Gastrocnemius medialis (tissue), 4 donors: ENCODE measurements at regions of chr5 and their contacts with region 1.

Region 1: GRCh38 chr5:65481635-65482295 is at the start of gene ADAMTS6:
- DNase-seq: peak; percentile 85 to 86
- ATAC-seq: peak; percentile 83 to 86
- H3K4me3 ChIP-seq: peak within 1 kb of the TSS; percentile 65 to 72 (median 68)
- H3K27ac ChIP-seq: peak within 1 kb of the TSS; percentile 84 to 89 (median 86)
- H3K4me1 ChIP-seq: peaks cover 8 to 10% of the 10 kb centered on the region in 2 donors
- H3K27me3 ChIP-seq: no peaks in the 10 kb centered on the region
- CTCF ChIP-seq: no peak
- POLR2A ChIP-seq: peak; percentile 49 to 74
- total RNA-seq, gene ADAMTS6: 0.05 to 0.49 (median 0.31) TPM

Region 2: DNA sequence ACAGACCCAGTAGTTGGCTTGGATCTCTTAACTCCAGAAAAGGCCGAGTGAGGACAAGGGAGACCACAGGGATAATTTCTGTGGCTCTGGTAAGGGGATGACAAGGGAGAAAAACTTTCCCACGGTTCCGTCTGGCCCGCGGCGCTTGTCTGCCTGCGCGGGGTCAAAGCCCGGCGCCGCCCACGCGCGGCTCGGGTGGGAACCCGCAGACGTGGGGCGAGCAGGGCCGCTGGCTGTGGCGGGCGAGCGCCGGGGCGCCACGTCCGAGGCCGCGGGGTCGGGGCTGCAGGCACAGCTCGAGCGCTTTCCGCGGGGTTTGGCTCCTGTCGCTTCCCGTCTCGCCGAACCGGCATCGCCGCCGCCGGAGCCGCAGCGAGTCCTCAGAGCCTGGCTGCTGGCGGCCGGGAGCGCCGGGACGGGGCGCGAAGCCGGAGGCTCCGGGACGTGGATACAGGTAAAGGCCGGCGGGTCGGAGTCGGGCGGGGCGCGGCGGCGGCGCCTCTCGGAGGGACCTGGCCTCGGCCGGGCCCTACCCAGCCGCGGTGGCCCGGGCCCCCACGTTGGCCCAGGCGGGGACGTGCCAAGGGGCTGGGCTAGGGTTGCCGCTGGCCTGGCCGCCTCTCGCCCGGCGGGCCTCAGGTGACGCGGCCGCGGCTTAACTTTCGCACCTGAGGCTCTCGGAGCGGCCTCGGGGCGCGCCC is 1316.1 kb before region 1 on chr5 and contains the start of gene RNF180:
- in situ Hi-C with region 1: no loop called
- intact Hi-C with region 1: loop called (anchors 10 kb)
- DNase-seq: peak; percentile 10 to 37
- ATAC-seq: peak; percentile 81
- H3K4me3 ChIP-seq: peak within 1 kb of the TSS; percentile 69 to 79 (median 76)
- H3K27ac ChIP-seq: peak within 1 kb of the TSS; percentile 57 to 81 (median 70)
- H3K4me1 ChIP-seq: peaks cover 3 to 26% of the 10 kb centered on the region in 2 donors
- H3K27me3 ChIP-seq: no peaks in the 10 kb centered on the region
- CTCF ChIP-seq: no peak
- POLR2A ChIP-seq: peak in 1 of 2 donors; percentile 18
- total RNA-seq, gene RNF180: 3.7 to 14.3 (median 5.2) TPM

Region 3: GRCh38 chr5:64811050-64811640 is 670.6 kb before region 1 on chr5:
- in situ Hi-C with region 1: loop called (anchors 5 to 10 kb)
- intact Hi-C with region 1: loop called (anchors 1 kb)
- DNase-seq: no peak
- ATAC-seq: no peak
- H3K4me3 ChIP-seq: no peak overlapping the region
- H3K27ac ChIP-seq: no peak overlapping the region
- H3K4me1 ChIP-seq: no peaks in the 10 kb centered on the region
- H3K27me3 ChIP-seq: no peaks in the 10 kb centered on the region
- CTCF ChIP-seq: peak; percentile 15 to 69 (median 57)
- POLR2A ChIP-seq: no peak

Region 4: DNA sequence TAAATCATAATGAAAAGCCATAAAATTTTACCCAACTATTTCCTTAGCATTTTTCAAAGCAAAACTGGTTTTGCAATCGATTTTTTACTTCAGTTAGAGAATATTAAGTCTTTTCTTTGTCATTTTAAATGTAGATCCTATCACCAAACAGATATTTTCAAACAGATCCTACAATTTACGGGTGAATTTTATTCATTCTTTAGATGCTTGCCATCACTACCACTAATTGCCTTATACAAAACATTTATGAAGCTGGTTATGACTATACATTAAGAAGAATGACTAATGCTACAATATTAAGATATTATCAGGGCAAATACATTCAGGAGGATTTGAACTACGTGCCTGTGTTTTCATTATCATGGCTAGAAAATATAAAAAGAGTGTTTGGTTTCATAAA is 516.2 kb before region 1 on chr5:
- in situ Hi-C with region 1: loop called in 2 of 4 experiments (anchors 10 to 25 kb)
- intact Hi-C with region 1: no loop called
- DNase-seq: no peak
- ATAC-seq: no peak
- H3K4me3 ChIP-seq: no peak overlapping the region
- H3K27ac ChIP-seq: no peak overlapping the region
- H3K4me1 ChIP-seq: no peaks in the 10 kb centered on the region
- H3K27me3 ChIP-seq: no peaks in the 10 kb centered on the region
- CTCF ChIP-seq: no peak
- POLR2A ChIP-seq: no peak

Region 5: GRCh38 chr5:65102828-65103711 is 378.7 kb before region 1 on chr5:
- in situ Hi-C with region 1: loop called in 1 of 4 experiments (anchors 25 kb)
- intact Hi-C with region 1: loop called (anchors 2 kb)
- DNase-seq: peak in 1 of 2 donors; percentile 15
- ATAC-seq: peak; percentile 48 to 57
- H3K4me3 ChIP-seq: peak overlapping the region; percentile 62 to 70 (median 65)
- H3K27ac ChIP-seq: peak overlapping the region; percentile 61 to 76 (median 68)
- H3K4me1 ChIP-seq: no peaks in the 10 kb centered on the region
- H3K27me3 ChIP-seq: no peaks in the 10 kb centered on the region
- CTCF ChIP-seq: peak in 4 of 5 experiments; percentile 11 to 50 (median 32)
- POLR2A ChIP-seq: no peak

Region 6: GRCh38 chr5:65461491-65461890 is 20.3 kb before region 1 on chr5:
- in situ Hi-C with region 1: no loop called
- intact Hi-C with region 1: no loop called
- DNase-seq: no peak
- ATAC-seq: no peak
- H3K4me3 ChIP-seq: no peak overlapping the region
- H3K27ac ChIP-seq: no peak overlapping the region
- H3K4me1 ChIP-seq: no peaks in the 10 kb centered on the region
- H3K27me3 ChIP-seq: no peaks in the 10 kb centered on the region
- CTCF ChIP-seq: no peak
- POLR2A ChIP-seq: no peak

Region 7: DNA sequence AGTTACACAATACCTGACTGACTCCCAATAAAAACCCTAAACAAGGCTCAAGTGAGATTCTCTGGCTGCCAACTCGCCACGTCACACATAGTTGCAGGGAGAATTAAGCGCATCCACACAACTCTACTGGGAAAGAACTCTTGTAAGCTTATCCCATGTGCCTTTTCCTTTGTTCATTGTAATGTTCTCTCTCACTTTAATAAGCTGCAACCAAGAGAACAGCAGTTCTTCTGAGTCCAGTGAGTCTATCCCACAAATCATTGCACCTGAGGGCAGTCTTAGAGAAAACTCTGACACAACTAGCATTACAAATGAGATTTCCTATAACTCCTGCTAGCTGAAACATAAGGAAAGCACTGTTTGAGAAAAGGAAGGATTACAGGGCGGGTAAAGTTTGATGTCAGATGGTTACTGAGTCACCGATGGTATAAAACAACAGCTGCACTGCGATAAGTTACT is 53.8 kb after region 1 on chr5:
- in situ Hi-C with region 1: no loop called
- intact Hi-C with region 1: no loop called
- DNase-seq: no peak
- ATAC-seq: no peak
- H3K4me3 ChIP-seq: no peak overlapping the region
- H3K27ac ChIP-seq: no peak overlapping the region
- H3K4me1 ChIP-seq: no peaks in the 10 kb centered on the region
- H3K27me3 ChIP-seq: no peaks in the 10 kb centered on the region
- CTCF ChIP-seq: no peak
- POLR2A ChIP-seq: no peak